Dorsolateral prefrontal cortex (tissue), 120 donors: ENCODE measurements at regions of chr16 and their contacts with region 1.

Region 1: DNA sequence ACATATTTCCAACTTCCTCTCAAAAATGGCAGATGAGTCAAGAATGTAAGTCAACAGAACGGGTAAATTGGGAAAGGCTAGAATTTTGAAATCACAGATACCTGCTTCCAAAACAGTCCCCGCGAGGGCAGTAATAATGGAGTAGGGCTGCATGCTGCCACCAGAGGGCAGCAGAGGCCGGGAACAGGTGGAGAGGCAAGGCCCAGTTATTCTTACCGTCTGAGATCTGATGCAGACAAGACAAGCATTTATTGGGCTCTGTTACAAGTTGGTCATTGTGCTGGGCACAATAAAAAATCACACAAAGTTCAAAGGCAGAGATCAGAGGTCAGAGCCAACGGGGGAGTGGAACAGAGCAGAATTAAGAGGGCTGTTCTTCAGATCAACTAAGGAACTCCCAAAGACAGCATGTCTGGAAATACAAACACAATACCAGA is 8.8 kb upstream of the MLKL start:
- DNase-seq: peak; percentile 79 to 90 (median 86)
- H3K4me3 ChIP-seq: no peak overlapping the region
- H3K27ac ChIP-seq: peak overlapping the region; percentile 10 to 100 (median 87)
- H3K27me3 ChIP-seq: no peaks in the 10 kb centered on the region
- CTCF ChIP-seq: peak in 55 of 56 donors; percentile 95 to 100 (median 99)

Region 2: DNA sequence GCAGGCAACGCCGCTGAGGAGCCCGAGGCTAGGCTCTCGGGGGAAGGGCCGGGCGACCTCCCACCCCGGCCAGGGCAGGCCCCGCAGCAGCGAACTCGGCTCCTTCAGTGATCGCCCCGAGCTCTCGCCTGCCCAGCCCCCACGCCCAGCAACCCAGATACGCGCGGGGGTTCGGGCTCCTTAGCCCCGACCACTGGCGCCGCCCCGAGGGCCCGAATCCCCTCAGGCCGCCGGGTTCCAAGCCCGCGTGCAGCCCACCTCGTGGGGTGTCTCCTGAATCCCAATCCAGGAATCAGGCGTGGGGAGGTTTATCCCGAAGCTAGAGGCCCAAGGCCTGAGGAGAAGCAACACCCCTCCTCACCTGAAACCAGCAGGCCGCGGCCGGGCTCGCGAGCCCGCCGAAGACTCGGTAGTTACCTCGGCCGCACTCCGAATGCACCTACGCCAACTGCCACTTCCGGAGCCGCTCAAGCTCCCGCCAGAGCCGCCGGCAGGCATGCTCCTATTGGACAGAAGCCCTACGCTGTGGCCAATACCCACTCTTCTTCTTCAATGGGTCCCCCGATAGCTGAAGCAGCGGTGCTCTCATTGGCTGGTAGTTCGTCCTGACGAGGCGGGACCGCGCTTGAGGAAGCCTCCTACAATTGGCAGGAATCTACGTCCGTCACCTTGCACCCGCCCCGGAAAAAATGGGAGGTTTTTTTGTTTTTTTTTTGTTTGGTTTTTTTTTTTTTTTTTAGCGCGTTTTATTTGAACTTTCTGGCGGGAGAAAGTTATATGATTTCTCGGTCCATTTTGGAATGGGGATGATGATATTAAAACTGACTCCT is 42.8 kb before region 1 on chr16 and contains the start of gene RFWD3:
- intact Hi-C with region 1: loop called in 1 of 2 experiments (anchors 5 kb)
- DNase-seq: peak; percentile 90 to 99 (median 98)
- H3K4me3 ChIP-seq: peak within 1 kb of the TSS; percentile 55 to 99 (median 90)
- H3K27ac ChIP-seq: peak within 1 kb of the TSS in 39 of 59 donors; percentile 6 to 84 (median 50)
- H3K27me3 ChIP-seq: no peaks in the 10 kb centered on the region
- CTCF ChIP-seq: peak in 12 of 56 donors; percentile 7 to 35 (median 20)
- total RNA-seq, gene RFWD3: 8.3 to 26.1 (median 14.4) TPM

Region 3: DNA sequence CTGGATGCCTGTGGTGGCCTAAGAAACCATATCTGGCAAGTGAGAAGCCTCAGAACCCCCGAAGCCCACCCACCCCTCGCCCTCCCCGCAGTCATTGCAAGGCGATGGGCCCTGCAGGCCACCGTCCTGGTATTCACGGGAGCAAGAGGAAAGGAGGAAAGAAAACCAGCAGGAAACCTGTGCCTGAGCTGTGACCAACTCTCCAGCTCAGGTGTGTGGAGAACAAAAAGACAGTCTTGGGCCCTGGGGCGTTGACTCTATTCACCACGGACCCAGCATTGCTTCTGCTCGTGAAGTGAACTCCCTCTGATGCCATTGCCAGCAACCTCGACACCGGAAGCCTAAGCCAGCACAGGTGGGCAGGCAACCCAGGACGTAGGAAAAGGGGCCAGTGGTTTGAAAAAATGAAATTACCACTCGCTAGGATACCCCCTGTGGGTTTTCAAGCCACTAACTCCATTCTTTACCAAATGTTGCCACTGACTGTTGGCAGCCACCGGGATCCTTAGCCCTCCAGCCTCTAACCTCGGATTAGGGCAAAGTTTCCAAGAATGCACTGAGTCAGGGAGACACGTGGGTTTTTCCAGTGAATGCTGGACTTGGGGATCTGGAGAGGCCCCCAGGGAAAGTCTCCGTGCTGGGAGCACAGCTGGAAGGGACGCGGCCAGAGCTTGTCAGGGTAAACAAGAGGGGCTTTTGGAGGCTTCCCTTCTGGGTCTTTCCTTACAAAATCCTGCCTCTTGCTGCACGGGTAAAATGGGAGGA is 40.0 kb after region 1 on chr16:
- intact Hi-C with region 1: loop called in 1 of 2 experiments (anchors 5 kb)
- DNase-seq: no peak
- H3K4me3 ChIP-seq: peak overlapping the region in 10 of 59 donors; percentile 3 to 34 (median 12)
- H3K27ac ChIP-seq: peak overlapping the region; percentile 79 to 100 (median 97)
- H3K27me3 ChIP-seq: peaks cover 0 to 10% (median 0%) of the 10 kb centered on the region in 45 donors
- CTCF ChIP-seq: no peak

Region 4: DNA sequence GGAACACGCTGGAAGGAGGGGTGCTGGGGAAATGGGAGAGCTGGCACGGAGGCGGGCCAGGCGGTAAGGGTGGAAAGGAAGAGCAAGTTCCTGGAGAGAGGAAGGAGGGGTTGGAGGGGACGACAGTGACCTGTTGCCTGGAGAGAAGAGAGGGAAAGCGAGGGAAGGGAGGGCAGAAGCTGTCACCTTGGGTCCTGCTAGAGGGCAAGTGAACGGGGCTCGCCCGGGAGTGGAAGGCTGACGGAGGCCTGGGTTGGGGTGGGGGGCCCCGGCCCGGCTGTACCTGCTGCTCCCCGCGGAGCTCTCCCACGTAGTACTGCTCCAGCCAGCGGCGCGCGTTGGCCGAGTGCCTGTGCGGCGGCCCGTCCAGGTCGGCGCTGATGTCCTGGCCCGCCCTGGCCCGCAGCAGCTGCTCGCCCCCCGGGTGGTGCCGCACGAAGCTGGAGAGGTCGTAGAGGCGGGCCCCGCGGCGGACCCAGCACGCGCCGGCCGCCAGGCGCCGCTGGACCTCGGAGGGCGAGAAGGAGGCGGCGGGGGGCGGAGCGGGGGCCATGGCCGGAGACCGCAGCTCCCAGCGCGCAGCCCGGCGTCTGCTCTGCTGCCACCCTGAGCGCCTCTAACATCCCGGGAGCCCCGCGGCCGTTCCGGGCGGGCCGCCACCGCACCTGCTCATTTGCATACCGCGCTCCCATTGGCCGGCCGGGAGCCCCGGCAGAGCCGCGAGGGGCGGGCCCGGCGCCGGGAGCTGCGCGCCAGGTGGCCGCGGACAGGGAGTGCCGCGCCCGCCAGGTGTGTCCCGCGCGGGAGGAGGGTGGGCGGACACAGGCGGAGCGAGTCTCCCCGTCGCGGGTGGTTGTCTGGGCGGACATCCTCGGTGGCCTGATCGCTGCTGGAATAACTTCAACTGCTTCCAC is 65.0 kb after region 1 on chr16 and contains the start of gene FA2H:
- intact Hi-C with region 1: loop called (anchors 1 to 5 kb)
- DNase-seq: peak; percentile 70 to 95 (median 88)
- H3K4me3 ChIP-seq: peak within 1 kb of the TSS; percentile 26 to 92 (median 70)
- H3K27ac ChIP-seq: peak within 1 kb of the TSS; percentile 40 to 99 (median 94)
- H3K27me3 ChIP-seq: peaks cover 0 to 21% (median 3%) of the 10 kb centered on the region in 45 donors
- CTCF ChIP-seq: peak in 53 of 56 donors; percentile 8 to 77 (median 57)
- total RNA-seq, gene FA2H: 7.4 to 185 (median 44.7) TPM

Region 5: DNA sequence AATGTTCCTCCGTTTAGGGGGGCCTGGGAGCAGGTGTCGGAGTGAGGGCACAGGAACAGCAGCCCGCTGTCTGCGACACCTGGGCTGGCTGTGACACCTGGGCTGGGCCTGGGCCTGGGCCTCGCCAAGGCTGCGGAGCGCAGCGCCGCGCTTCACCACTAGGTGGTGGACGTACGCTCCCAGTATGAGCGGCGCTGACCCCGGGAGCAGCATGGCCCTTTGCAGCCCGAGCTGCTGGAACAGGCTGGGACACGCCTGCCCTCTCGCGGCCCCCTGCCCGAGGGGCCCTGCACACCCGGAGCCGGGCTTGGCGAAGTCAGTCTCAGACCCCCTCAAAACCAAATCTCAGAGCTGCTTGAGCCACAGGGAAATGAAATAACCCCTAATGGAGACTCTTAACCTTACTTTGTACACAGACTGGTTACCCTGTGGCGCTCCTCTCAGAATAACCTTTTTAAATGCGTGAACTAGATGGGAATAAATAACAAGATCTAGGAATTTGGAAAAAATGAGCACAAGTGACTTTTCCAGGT is 103.7 kb after region 1 on chr16:
- intact Hi-C with region 1: loop called (anchors 1 to 2 kb)
- DNase-seq: peak; percentile 58 to 84 (median 78)
- H3K4me3 ChIP-seq: peak overlapping the region in 2 of 59 donors; percentile 10 to 23
- H3K27ac ChIP-seq: peak overlapping the region in 55 of 59 donors; percentile 4 to 90 (median 71)
- H3K27me3 ChIP-seq: no peaks in the 10 kb centered on the region
- CTCF ChIP-seq: peak; percentile 45 to 100 (median 95)

Region 6: DNA sequence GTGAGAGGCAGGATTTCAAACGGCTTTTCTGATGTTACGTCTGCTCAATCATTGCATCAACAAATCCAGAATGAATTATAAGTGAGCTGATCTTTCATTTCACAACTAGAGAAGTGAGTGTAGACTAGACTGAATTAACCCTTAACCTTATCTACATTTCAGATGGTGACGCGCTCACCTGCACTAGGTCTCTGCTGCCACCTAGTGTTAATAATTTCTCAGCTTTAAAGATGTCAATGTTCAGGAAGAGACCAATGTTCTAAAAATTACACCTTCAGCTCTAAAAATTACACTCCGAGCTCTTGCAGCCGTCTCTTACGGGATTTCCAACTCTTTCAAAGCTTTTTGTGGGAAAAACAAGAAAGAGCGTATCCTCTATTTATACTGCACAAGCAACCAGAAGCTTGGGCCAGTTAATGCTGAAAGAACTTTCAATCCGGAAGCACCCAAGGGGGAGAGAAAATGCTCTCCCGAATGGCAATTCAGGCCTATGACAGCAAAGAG is 153.3 kb after region 1 on chr16:
- intact Hi-C with region 1: loop called (anchors 1 to 2 kb)
- DNase-seq: peak in 1 of 10 donors; percentile 23
- H3K4me3 ChIP-seq: no peak overlapping the region
- H3K27ac ChIP-seq: peak overlapping the region in 24 of 59 donors; percentile 2 to 68 (median 36)
- H3K27me3 ChIP-seq: no peaks in the 10 kb centered on the region
- CTCF ChIP-seq: peak; percentile 47 to 97 (median 88)